Panc1 (cell line): ENCODE measurements at regions of chr1 and their contacts with region 1.

Region 1: GRCh38 chr1:10430216-10431069 is at the start of gene CENPS:
- DNase-seq: peak; percentile 46
- ATAC-seq: peak; percentile 94
- H3K4me3 ChIP-seq: peak within 1 kb of the TSS; percentile 83 to 97
- H3K27ac ChIP-seq: peak within 1 kb of the TSS; percentile 87
- H3K4me1 ChIP-seq: no peaks in the 10 kb centered on the region; the same call in 1 of the 2 replicates
- H3K27me3 ChIP-seq: no peaks in the 10 kb centered on the region
- CTCF ChIP-seq: peak; percentile 98
- total RNA-seq, gene CENPS: 40.8 TPM

Region 2: DNA sequence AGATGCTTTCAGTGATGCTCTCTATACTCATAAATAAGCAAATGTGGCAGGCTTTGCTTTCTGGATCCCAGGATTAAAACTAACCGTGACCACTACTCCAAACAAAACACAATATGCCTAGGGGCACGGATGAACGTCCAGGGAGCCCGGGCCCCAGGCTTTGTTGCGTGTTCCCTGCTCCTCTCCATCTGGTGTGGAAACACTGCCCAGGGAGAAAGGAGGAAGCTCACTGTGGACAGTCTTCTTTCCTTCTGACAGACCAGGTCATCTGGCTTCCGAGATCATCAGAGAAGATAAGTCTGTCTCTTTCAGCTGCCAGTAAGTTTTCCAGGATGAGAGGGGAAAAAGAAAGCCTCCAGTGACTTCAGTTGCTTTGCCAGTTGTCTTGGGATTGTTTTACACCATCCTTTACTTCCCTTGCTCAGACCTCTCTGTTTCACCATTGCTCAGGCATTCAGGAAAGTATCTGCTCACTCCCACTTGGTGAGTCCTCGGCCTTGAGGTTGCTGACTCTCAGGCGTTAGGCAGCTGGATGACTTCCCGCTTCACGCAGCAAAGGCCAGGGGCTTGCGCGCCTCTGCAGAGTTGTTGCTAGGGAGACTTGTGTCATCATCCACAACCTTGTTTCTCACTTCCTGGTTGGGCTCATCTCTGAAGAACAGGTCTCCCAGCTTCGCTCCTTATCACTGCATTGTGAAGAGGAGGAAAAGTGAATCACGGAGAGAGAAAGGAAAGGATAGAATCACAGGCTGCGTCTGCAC is 52.2 kb before region 1 on chr1:
- CTCF ChIA-PET with region 1: interaction called, 3 read pairs
- POLR2A ChIA-PET with region 1: no interaction called
- in situ Hi-C with region 1: no loop called
- intact Hi-C with region 1: loop called (anchors 1 kb)
- DNase-seq: no peak
- ATAC-seq: no peak
- H3K4me3 ChIP-seq: no peak overlapping the region
- H3K27ac ChIP-seq: no peak overlapping the region
- H3K4me1 ChIP-seq: no peaks in the 10 kb centered on the region
- H3K27me3 ChIP-seq: no peaks in the 10 kb centered on the region
- CTCF ChIP-seq: no peak

Region 3: DNA sequence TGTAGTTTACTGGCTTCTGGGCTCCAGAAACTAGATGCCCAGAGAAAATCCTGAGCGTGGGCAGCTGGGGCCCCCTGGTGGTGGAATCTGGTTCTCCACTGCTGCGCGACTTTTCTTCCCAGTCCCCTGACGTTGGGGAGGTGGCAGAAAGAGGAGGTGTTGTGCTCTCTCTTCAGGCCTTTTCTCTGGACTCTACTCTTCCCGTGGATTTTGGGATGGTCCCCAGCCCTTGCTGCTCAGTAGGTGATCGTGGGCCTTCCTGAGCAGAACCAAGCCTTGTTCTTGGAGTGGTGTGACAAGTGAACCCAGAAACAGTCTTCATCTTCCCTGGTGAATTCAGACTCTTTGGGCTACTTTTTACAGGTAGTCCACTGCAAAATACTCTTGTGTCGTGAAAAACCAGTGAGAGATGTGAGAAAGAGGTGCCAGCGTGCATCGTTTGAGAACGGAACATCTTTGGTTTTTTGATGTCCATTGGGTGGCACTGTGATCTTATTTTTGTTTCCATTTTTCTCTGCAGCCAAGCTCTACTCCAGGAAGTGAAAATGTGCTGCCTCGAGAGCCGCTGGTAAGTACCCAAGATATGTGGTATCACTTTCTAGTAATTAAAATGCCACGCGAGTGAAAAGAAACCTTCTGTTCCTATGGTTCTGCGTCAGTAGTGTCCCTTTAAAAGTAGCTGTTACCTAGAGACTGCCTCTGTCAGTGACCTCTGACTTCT is 64.5 kb after region 1 on chr1:
- CTCF ChIA-PET with region 1: interaction called, 11 read pairs
- POLR2A ChIA-PET with region 1: interaction called, 3 read pairs
- in situ Hi-C with region 1: no loop called
- intact Hi-C with region 1: loop called (anchors 2 kb)
- DNase-seq: no peak
- ATAC-seq: peak; percentile 93
- H3K4me3 ChIP-seq: peak overlapping the region in 1 of 2 experiments; percentile 40; a peak in 2 of 4 replicates
- H3K27ac ChIP-seq: peak overlapping the region; percentile 7
- H3K4me1 ChIP-seq: peaks cover 12% of the 10 kb centered on the region
- H3K27me3 ChIP-seq: no peaks in the 10 kb centered on the region
- CTCF ChIP-seq: peak; percentile 99